PC-9 (cell line): ENCODE measurements at regions of chr5 and their contacts with region 1.

Region 1: DNA sequence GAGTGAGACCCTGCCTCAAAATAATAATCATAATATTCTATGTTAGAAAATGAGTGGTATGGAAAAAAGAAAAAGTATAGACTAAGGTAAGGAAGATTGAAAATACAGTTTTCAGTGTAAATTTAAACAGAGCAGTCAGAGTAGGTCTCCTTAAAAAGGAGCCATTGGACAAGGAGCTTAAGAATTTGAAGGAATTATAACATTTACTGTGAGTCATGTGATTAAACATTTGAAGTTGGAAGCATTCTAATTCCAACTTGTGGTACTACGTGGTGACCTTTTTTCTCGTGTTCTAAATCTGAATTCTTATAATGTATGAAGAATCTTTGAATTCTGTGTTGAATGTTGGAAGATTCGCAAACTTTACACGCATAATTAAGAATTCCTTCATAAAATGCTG is 39.3 kb upstream of the TMEM171 start:
- DNase-seq: no peak
- H3K4me3 ChIP-seq: no peak overlapping the region
- H3K27ac ChIP-seq: no peak overlapping the region
- H3K4me1 ChIP-seq: no peaks in the 10 kb centered on the region
- H3K27me3 ChIP-seq: no peaks in the 10 kb centered on the region
- CTCF ChIP-seq: no peak

Region 2: GRCh38 chr5:72920690-72921502 is 160.2 kb before region 1 on chr5:
- CTCF ChIA-PET with region 1: no interaction called
- POLR2A ChIA-PET with region 1: no interaction called
- intact Hi-C with region 1: loop called (anchors 5 kb)
- DNase-seq: peak in 1 of 2 experiments; percentile 52
- H3K4me3 ChIP-seq: no peak overlapping the region
- H3K27ac ChIP-seq: no peak overlapping the region
- H3K4me1 ChIP-seq: no peaks in the 10 kb centered on the region
- H3K27me3 ChIP-seq: no peaks in the 10 kb centered on the region
- CTCF ChIP-seq: peak; percentile 69

Region 3: DNA sequence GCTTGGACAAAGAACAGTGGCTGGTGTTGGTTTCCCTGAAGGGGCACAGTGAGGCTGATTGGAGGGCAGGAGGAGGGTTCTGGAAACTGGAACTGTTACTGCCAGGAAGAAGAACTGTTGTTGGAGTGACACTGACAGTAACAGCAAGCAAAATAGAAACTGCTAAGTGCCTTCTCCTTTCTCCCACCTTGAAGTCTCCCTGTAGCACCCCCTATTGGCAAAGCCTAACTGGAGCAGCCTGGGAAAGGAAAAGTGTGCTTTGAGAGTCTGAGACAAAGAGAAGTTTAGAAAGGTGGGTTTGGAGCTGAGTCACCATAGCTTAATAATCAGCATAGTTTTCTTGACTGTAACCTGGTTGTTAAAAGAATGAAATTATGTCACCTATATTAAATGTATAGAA is 89.4 kb after region 1 on chr5:
- CTCF ChIA-PET with region 1: no interaction called
- POLR2A ChIA-PET with region 1: no interaction called
- intact Hi-C with region 1: no loop called
- DNase-seq: no peak
- H3K4me3 ChIP-seq: no peak overlapping the region
- H3K27ac ChIP-seq: no peak overlapping the region
- H3K4me1 ChIP-seq: peaks cover 6% of the 10 kb centered on the region; the same call in 1 of the 2 replicates
- H3K27me3 ChIP-seq: no peaks in the 10 kb centered on the region
- CTCF ChIP-seq: peak; percentile 51; the same call in 1 of the 2 replicates

Region 4: DNA sequence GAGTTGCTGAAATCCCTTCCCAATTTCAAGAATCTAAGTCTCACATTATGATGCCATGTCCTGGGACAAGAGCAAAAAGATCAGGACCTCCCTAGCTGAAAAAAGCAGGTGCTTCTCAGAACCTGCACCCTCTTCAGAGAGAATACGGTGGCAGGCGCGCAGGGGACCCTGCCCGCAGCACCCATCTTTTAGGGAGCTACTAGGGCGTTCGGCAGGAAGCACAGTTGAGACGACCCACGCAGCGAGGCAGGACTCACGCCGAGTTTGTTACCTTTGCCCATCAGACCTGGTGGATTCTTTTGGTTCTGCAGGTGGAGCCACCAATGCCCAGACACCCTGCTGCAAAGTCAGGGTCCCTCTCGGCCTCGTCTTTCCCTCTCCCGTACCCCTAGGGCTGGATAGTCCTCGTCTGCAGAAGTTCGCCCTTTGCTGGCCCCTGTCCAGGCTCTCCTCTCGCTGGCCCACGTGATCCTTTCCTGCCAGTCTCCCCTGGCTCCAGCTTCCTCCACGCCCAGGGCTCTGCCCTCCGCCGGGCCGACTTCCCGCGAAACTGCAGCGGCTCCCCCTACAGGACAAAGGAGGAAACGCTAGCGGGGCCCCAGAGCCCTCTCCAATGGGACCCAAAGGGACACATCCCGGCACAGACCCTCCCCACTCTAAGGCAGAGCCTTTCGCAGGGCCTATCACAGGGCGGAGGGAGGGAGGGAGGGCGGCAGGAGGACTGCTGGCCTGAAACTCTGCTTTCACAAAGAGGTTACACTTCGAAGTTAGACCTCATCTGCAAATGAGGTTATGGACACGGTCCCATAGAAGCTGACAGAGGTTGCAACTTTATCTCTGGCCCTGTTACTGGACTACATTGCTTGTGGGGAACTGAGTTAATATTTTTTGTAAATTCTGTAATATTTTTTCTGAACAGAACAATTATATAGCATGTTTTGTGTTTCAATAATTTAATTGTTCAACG is 120.7 kb after region 1 on chr5:
- CTCF ChIA-PET with region 1: no interaction called
- POLR2A ChIA-PET with region 1: no interaction called
- intact Hi-C with region 1: loop called (anchors 5 kb)
- DNase-seq: peak; percentile 53 to 70
- H3K4me3 ChIP-seq: no peak overlapping the region
- H3K27ac ChIP-seq: no peak overlapping the region
- H3K4me1 ChIP-seq: no peaks in the 10 kb centered on the region
- H3K27me3 ChIP-seq: no peaks in the 10 kb centered on the region
- CTCF ChIP-seq: peak; percentile 89

Region 5: GRCh38 chr5:73303148-73304079 is 222.3 kb after region 1 on chr5:
- CTCF ChIA-PET with region 1: no interaction called
- POLR2A ChIA-PET with region 1: no interaction called
- intact Hi-C with region 1: loop called (anchors 5 kb)
- DNase-seq: peak in 1 of 2 experiments; percentile 62
- H3K4me3 ChIP-seq: peak overlapping the region; percentile 52; the same call in 1 of the 2 replicates
- H3K27ac ChIP-seq: no peak overlapping the region
- H3K4me1 ChIP-seq: no peaks in the 10 kb centered on the region
- H3K27me3 ChIP-seq: no peaks in the 10 kb centered on the region
- CTCF ChIP-seq: peak; percentile 45; the same call in 1 of the 2 replicates

Region 6: GRCh38 chr5:73471654-73472053 is 390.6 kb after region 1 on chr5:
- CTCF ChIA-PET with region 1: no interaction called
- POLR2A ChIA-PET with region 1: no interaction called
- intact Hi-C with region 1: no loop called
- DNase-seq: no peak
- H3K4me3 ChIP-seq: no peak overlapping the region
- H3K27ac ChIP-seq: no peak overlapping the region
- H3K4me1 ChIP-seq: no peaks in the 10 kb centered on the region
- H3K27me3 ChIP-seq: no peaks in the 10 kb centered on the region
- CTCF ChIP-seq: no peak